Activated CD4-positive, alpha-beta memory T cell treated with anti-CD3 and anti-CD28 coated beads, Interleukin-2, amount 10 ng/mL, durations not matched to agents 7 days and 5 days (primary cell): ENCODE measurements at regions of chr17 and their contacts with region 1.

Region 1: GRCh38 chr17:28763804-28764266 is 20.0 kb downstream of the TRAF4 start:
- DNase-seq: peak; percentile 79
- H3K4me3 Mint-ChIP-seq: no peak overlapping the region
- H3K27ac Mint-ChIP-seq: no peak overlapping the region
- H3K4me1 Mint-ChIP-seq: peaks cover 28% of the 10 kb centered on the region
- H3K27me3 Mint-ChIP-seq: no peaks in the 10 kb centered on the region

Region 2: GRCh38 chr17:28698253-28698941 is 65.4 kb before region 1 on chr17:
- CTCF ChIA-PET with region 1: no interaction called
- POLR2A ChIA-PET with region 1: no interaction called
- DNase-seq: no peak
- H3K4me3 Mint-ChIP-seq: no peak overlapping the region
- H3K27ac Mint-ChIP-seq: no peak overlapping the region
- H3K4me1 Mint-ChIP-seq: no peaks in the 10 kb centered on the region
- H3K27me3 Mint-ChIP-seq: no peaks in the 10 kb centered on the region

Region 3: GRCh38 chr17:28744104-28744971 is 19.5 kb before region 1 on chr17:
- CTCF ChIA-PET with region 1: interaction called, 88 read pairs
- POLR2A ChIA-PET with region 1: interaction called, 10 read pairs
- DNase-seq: peak; percentile 75
- H3K4me3 Mint-ChIP-seq: peak overlapping the region; percentile 82
- H3K27ac Mint-ChIP-seq: peak overlapping the region; percentile 82
- H3K4me1 Mint-ChIP-seq: peaks cover 34% of the 10 kb centered on the region
- H3K27me3 Mint-ChIP-seq: no peaks in the 10 kb centered on the region

Region 4: GRCh38 chr17:28796062-28796461 is 32.2 kb after region 1 on chr17:
- CTCF ChIA-PET with region 1: interaction called, 10 read pairs
- POLR2A ChIA-PET with region 1: interaction called, 3 read pairs
- DNase-seq: no peak
- H3K4me3 Mint-ChIP-seq: no peak overlapping the region
- H3K27ac Mint-ChIP-seq: no peak overlapping the region
- H3K4me1 Mint-ChIP-seq: no peaks in the 10 kb centered on the region
- H3K27me3 Mint-ChIP-seq: no peaks in the 10 kb centered on the region

Region 5: GRCh38 chr17:28842282-28843012 is 78.6 kb after region 1 on chr17 and contains the start of gene FAM222B:
- CTCF ChIA-PET with region 1: interaction called, 20 read pairs
- POLR2A ChIA-PET with region 1: interaction called, 10 read pairs
- DNase-seq: peak; percentile 88
- H3K4me3 Mint-ChIP-seq: peak within 1 kb of the TSS; percentile 100
- H3K27ac Mint-ChIP-seq: peak within 1 kb of the TSS; percentile 88
- H3K4me1 Mint-ChIP-seq: peaks cover 26% of the 10 kb centered on the region
- H3K27me3 Mint-ChIP-seq: no peaks in the 10 kb centered on the region
- total RNA-seq, gene FAM222B: 15.5 to 17.1 TPM

Region 6: DNA sequence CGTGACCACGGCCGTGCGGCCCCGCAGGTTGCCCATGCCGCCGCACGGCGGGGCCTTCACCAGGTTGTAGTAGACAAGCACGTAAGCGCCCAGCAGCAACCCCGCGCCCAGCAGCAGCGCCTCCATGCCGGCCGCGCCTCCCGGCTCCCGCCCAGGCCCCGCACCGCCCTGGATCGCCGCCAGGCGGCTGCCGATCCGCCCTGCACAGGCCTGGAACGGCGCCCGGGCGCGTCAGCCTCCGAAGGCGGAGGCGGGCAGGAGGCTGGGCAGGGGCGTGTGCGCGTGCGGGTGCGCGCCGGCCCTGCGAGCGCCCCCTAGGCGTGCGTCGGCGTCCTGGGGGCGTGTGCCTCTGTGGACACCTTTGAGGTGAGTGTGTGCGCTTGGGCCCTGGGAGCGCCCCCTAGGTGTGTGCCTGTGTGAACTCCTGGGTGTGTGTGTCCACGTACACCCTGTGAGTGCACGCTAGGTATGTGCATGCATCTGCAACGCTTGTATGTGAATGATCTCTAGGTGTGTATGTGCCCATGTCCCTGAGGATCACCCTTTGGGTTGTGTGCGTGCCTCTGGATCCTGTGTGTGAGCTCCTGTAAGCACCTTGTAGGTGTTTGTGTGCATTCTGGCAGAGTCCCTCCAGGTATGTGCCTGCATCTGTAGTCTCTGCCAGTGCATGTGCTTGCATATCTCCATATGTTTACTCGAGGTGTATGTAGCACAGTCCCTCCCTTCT is 139.1 kb after region 1 on chr17 and contains the start of gene DHRS13:
- CTCF ChIA-PET with region 1: interaction called, 30 read pairs
- POLR2A ChIA-PET with region 1: interaction called, 5 read pairs
- DNase-seq: peak; percentile 94
- H3K4me3 Mint-ChIP-seq: peak within 1 kb of the TSS; percentile 79
- H3K27ac Mint-ChIP-seq: peak within 1 kb of the TSS; percentile 78
- H3K4me1 Mint-ChIP-seq: peaks cover 48% of the 10 kb centered on the region
- H3K27me3 Mint-ChIP-seq: no peaks in the 10 kb centered on the region
- total RNA-seq, gene DHRS13: 25.2 to 25.7 TPM

Region 7: DNA sequence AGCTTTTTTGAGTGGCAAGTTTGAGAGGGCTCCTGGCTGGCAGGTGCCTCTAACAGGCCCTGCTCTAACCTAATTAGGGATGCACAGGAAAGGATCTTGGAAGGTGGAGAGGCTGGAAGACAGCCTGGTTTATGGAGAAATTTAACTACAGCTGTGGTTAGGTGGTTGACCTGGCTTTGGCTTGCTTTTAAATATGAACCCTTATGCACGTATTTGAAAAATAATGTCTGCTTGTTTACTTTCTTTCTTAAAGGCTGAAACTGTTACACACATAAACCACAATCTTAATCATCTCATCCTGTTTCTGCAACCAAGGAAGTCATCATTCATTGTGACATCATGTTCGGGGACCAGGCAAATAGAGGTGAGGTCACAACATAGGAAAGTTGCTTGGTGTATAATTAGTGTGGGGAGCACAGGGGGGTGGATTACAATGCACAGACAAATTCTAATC is 162.1 kb after region 1 on chr17:
- CTCF ChIA-PET with region 1: interaction called, 12 read pairs
- POLR2A ChIA-PET with region 1: no interaction called
- DNase-seq: peak; percentile 59
- H3K4me3 Mint-ChIP-seq: peak overlapping the region; percentile 43
- H3K27ac Mint-ChIP-seq: peak overlapping the region; percentile 78
- H3K4me1 Mint-ChIP-seq: peaks cover 48% of the 10 kb centered on the region
- H3K27me3 Mint-ChIP-seq: no peaks in the 10 kb centered on the region

Region 8: DNA sequence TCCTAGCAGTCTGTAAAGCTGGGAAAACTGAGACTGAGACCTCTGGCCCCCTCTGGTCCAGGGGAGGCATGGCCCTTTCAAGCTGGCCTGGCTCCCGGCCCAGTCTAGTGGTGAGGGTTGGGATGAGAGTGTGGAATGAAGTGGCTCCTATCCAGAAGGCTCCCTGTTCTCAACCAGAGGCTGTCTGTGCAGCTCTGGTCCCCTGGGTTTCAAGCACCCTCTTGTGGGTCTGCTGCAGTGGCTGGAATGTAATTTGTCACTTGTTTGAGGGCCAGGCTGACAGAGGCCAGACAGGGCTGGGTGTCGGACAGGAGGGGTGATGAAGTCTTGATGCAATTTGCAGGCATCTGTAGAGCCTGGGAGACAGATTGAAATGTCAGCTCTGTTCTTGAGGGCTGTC is 209.6 kb after region 1 on chr17:
- CTCF ChIA-PET with region 1: no interaction called
- POLR2A ChIA-PET with region 1: no interaction called
- DNase-seq: no peak
- H3K4me3 Mint-ChIP-seq: no peak overlapping the region
- H3K27ac Mint-ChIP-seq: no peak overlapping the region
- H3K4me1 Mint-ChIP-seq: no peaks in the 10 kb centered on the region
- H3K27me3 Mint-ChIP-seq: peaks cover 13% of the 10 kb centered on the region